B cell (primary cell): ENCODE measurements at regions of chr9 and their contacts with region 1.

Region 1: GRCh38 chr9:124126571-124127289 is 115.2 kb downstream of the LHX2 start:
- DNase-seq: peak; percentile 87
- ATAC-seq: peak; percentile 88
- H3K4me3 ChIP-seq: no peak overlapping the region
- H3K4me3 Mint-ChIP-seq: peak overlapping the region; percentile 2
- H3K27ac ChIP-seq: no peak overlapping the region
- H3K27ac Mint-ChIP-seq: peak overlapping the region; percentile 74
- H3K4me1 ChIP-seq: peaks cover 4 to 16% of the 10 kb centered on the region in 2 donors
- H3K4me1 Mint-ChIP-seq: peaks cover 21% of the 10 kb centered on the region
- H3K27me3 ChIP-seq: no peaks in the 10 kb centered on the region
- H3K27me3 Mint-ChIP-seq: no peaks in the 10 kb centered on the region
- CTCF ChIP-seq: peak; percentile 99

Region 2: DNA sequence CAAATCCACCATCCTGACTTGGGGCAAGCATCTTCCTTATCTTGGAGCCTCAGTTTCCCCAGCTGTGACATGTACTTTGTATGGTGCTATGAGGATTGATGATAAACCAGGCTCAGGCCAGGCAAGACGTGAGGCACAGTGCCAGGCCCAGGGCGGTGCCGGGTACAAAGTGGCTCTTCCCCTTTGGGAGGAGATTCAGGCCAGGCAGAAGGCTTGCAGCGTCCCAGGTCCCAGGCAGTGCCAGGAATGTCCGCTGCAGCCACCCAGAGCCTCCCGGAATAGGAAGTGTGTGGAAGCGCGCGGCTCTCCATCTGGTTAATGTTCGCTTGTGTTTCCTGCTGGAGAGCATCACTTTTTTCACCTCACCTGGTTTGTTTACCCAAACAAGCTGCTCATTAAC is 184.2 kb before region 1 on chr9:
- CTCF ChIA-PET with region 1: no interaction called
- POLR2A ChIA-PET with region 1: no interaction called
- intact Hi-C with region 1: no loop called
- DNase-seq: no peak
- ATAC-seq: no peak
- H3K4me3 ChIP-seq: no peak overlapping the region
- H3K4me3 Mint-ChIP-seq: no peak overlapping the region
- H3K27ac ChIP-seq: no peak overlapping the region
- H3K27ac Mint-ChIP-seq: no peak overlapping the region
- H3K4me1 ChIP-seq: no peaks in the 10 kb centered on the region
- H3K4me1 Mint-ChIP-seq: no peaks in the 10 kb centered on the region
- H3K27me3 ChIP-seq: peaks cover 0 to 5% (median 0%) of the 10 kb centered on the region in 4 experiments
- H3K27me3 Mint-ChIP-seq: peaks cover 14% of the 10 kb centered on the region
- CTCF ChIP-seq: no peak

Region 3: GRCh38 chr9:123954518-123955280 is 172.0 kb before region 1 on chr9:
- CTCF ChIA-PET with region 1: no interaction called
- POLR2A ChIA-PET with region 1: no interaction called
- intact Hi-C with region 1: no loop called
- DNase-seq: no peak
- ATAC-seq: no peak
- H3K4me3 ChIP-seq: no peak overlapping the region
- H3K4me3 Mint-ChIP-seq: no peak overlapping the region
- H3K27ac ChIP-seq: no peak overlapping the region
- H3K27ac Mint-ChIP-seq: no peak overlapping the region
- H3K4me1 ChIP-seq: no peaks in the 10 kb centered on the region
- H3K4me1 Mint-ChIP-seq: no peaks in the 10 kb centered on the region
- H3K27me3 ChIP-seq: peaks cover 0 to 14% (median 2%) of the 10 kb centered on the region in 4 experiments
- H3K27me3 Mint-ChIP-seq: peaks cover 20% of the 10 kb centered on the region
- CTCF ChIP-seq: no peak

Region 4: DNA sequence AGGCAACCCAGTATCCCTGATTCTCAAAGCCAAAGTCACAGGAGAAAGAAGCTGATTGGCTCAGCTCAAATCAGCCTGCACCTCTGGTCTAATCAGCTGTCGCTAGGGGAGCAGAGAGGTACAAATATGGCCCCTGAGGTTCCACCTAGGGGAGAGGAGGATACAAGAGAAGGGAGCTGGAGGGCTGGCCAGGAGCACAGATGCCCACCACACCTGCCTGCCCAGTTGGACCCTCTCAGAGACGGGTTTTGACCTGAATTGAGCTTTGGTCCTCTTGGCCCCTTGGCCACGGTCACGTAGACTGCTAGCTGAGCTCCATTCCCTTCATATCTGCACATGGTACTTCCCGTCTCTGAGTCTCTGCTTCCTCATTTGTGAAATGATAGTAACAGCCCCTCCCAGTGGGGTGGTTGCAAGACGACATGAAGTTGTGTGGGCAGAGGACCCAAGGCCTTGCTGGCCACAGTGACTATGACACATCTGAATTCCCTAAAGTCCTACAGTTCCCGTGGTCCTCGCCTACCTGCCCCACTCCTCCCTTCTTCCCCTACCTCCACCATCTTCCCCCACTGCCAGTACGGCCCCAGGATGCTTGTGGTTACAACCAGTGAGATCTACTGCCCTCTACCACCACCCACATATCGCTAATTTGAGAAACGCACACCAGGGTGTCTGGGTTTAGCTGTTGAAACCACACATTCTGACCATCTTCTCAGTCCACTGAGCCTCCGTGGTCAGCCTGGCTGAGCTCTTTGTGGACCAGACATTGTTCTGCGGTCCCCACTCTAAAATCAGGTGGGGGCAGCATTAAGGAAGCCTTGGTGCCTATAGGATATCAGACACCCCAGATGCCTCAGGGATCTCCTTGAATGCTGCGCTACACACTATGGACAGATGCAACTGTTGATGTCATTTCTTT is 70.7 kb after region 1 on chr9:
- CTCF ChIA-PET with region 1: interaction called, 42 read pairs
- POLR2A ChIA-PET with region 1: interaction called, 3 read pairs
- intact Hi-C with region 1: loop called (anchors 1 kb)
- DNase-seq: peak; percentile 88
- ATAC-seq: peak; percentile 84
- H3K4me3 ChIP-seq: peak overlapping the region in 4 of 5 experiments; percentile 22 to 42 (median 30)
- H3K4me3 Mint-ChIP-seq: peak overlapping the region; percentile 81
- H3K27ac ChIP-seq: peak overlapping the region; percentile 82 to 90
- H3K27ac Mint-ChIP-seq: peak overlapping the region; percentile 99
- H3K4me1 ChIP-seq: peaks cover 53 to 59% of the 10 kb centered on the region in 2 donors
- H3K4me1 Mint-ChIP-seq: peaks cover 57% of the 10 kb centered on the region
- H3K27me3 ChIP-seq: no peaks in the 10 kb centered on the region
- H3K27me3 Mint-ChIP-seq: no peaks in the 10 kb centered on the region
- CTCF ChIP-seq: peak; percentile 33

Region 5: GRCh38 chr9:124239249-124240073 is 112.7 kb after region 1 on chr9:
- CTCF ChIA-PET with region 1: interaction called, 12 read pairs
- POLR2A ChIA-PET with region 1: interaction called, 3 read pairs
- intact Hi-C with region 1: no loop called
- DNase-seq: peak; percentile 82
- ATAC-seq: peak; percentile 98
- H3K4me3 ChIP-seq: peak overlapping the region in 1 of 5 experiments; percentile 22
- H3K4me3 Mint-ChIP-seq: peak overlapping the region; percentile 38
- H3K27ac ChIP-seq: peak overlapping the region in 1 of 2 donors; percentile 40
- H3K27ac Mint-ChIP-seq: peak overlapping the region; percentile 85
- H3K4me1 ChIP-seq: peaks cover 25 to 37% of the 10 kb centered on the region in 2 donors
- H3K4me1 Mint-ChIP-seq: peaks cover 47% of the 10 kb centered on the region
- H3K27me3 ChIP-seq: no peaks in the 10 kb centered on the region
- H3K27me3 Mint-ChIP-seq: no peaks in the 10 kb centered on the region
- CTCF ChIP-seq: no peak

Region 6: DNA sequence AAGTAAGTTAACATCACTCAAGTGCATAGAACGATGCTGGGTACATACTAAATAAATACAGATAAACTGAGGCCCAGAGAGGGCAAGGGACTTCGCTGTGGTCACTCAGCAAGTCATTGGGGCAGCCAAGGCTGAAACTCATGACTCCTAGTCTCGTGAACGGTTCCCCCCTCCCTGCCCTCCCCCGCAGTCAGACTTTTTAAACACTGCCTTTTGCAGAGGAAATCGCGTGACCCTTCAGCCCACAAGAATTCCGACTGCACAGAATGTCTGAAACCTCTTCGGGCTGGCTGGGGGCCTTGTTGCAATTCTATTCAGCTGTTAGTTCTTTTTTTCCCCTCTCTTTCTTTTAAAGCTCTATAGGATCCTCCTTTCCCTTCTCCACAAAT is 159.2 kb after region 1 on chr9:
- CTCF ChIA-PET with region 1: interaction called, 60 read pairs
- POLR2A ChIA-PET with region 1: no interaction called
- intact Hi-C with region 1: no loop called
- DNase-seq: peak; percentile 85
- ATAC-seq: peak; percentile 42
- H3K4me3 ChIP-seq: peak overlapping the region in 2 of 5 experiments; percentile 7 to 48
- H3K4me3 Mint-ChIP-seq: peak overlapping the region; percentile 84
- H3K27ac ChIP-seq: peak overlapping the region; percentile 73 to 86
- H3K27ac Mint-ChIP-seq: peak overlapping the region; percentile 96
- H3K4me1 ChIP-seq: peaks cover 63 to 88% of the 10 kb centered on the region in 2 donors
- H3K4me1 Mint-ChIP-seq: peaks cover 87% of the 10 kb centered on the region
- H3K27me3 ChIP-seq: no peaks in the 10 kb centered on the region
- H3K27me3 Mint-ChIP-seq: no peaks in the 10 kb centered on the region
- CTCF ChIP-seq: no peak

Region 7: GRCh38 chr9:124302921-124303320 is 176.2 kb after region 1 on chr9:
- CTCF ChIA-PET with region 1: interaction called, 13 read pairs
- POLR2A ChIA-PET with region 1: no interaction called
- intact Hi-C with region 1: no loop called
- DNase-seq: no peak
- ATAC-seq: no peak
- H3K4me3 ChIP-seq: no peak overlapping the region
- H3K4me3 Mint-ChIP-seq: no peak overlapping the region
- H3K27ac ChIP-seq: no peak overlapping the region
- H3K27ac Mint-ChIP-seq: no peak overlapping the region
- H3K4me1 ChIP-seq: peaks cover 20 to 21% of the 10 kb centered on the region in 2 donors
- H3K4me1 Mint-ChIP-seq: peaks cover 25% of the 10 kb centered on the region
- H3K27me3 ChIP-seq: no peaks in the 10 kb centered on the region
- H3K27me3 Mint-ChIP-seq: no peaks in the 10 kb centered on the region
- CTCF ChIP-seq: no peak

Region 8: GRCh38 chr9:124326378-124326777 is 199.6 kb after region 1 on chr9:
- CTCF ChIA-PET with region 1: interaction called, 59 read pairs
- POLR2A ChIA-PET with region 1: no interaction called
- intact Hi-C with region 1: loop called (anchors 1 kb)
- DNase-seq: no peak
- ATAC-seq: no peak
- H3K4me3 ChIP-seq: no peak overlapping the region
- H3K4me3 Mint-ChIP-seq: no peak overlapping the region
- H3K27ac ChIP-seq: no peak overlapping the region
- H3K27ac Mint-ChIP-seq: peak overlapping the region; percentile 50
- H3K4me1 ChIP-seq: peaks cover 0 to 22% of the 10 kb centered on the region in 2 donors
- H3K4me1 Mint-ChIP-seq: peaks cover 27% of the 10 kb centered on the region
- H3K27me3 ChIP-seq: no peaks in the 10 kb centered on the region
- H3K27me3 Mint-ChIP-seq: no peaks in the 10 kb centered on the region
- CTCF ChIP-seq: no peak

Region 9: DNA sequence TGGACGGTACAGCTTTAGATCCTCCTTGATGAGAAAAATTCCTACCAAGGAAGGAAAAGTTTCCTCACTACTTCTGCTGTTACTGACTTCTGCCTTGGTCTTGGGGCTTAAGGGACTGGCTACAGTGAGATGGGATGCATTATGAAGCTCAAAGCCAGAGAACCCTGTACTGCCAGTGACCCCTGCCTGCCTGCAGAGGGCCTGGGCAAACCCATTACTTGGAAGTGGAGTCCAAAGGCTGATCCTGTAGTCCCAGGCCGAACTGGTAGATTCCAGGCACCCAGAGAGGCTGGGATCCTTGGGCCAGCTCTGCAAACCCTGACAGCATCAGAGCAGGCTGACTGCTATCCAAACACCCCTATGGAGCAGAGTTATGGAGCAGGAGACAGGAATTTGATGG is 406.2 kb after region 1 on chr9:
- CTCF ChIA-PET with region 1: interaction called, 14 read pairs
- POLR2A ChIA-PET with region 1: no interaction called
- intact Hi-C with region 1: loop called (anchors 2 kb)
- DNase-seq: no peak
- ATAC-seq: no peak
- H3K4me3 ChIP-seq: no peak overlapping the region
- H3K4me3 Mint-ChIP-seq: no peak overlapping the region
- H3K27ac ChIP-seq: no peak overlapping the region
- H3K27ac Mint-ChIP-seq: no peak overlapping the region
- H3K4me1 ChIP-seq: no peaks in the 10 kb centered on the region
- H3K4me1 Mint-ChIP-seq: no peaks in the 10 kb centered on the region
- H3K27me3 ChIP-seq: no peaks in the 10 kb centered on the region
- H3K27me3 Mint-ChIP-seq: no peaks in the 10 kb centered on the region
- CTCF ChIP-seq: no peak